CD4-positive, alpha-beta T cell (primary cell): ENCODE measurements at regions of chr9 and their contacts with region 1.

Region 1: GRCh38 chr9:37284636-37285035 is 137.9 kb upstream of the GRHPR start:
- DNase-seq: no peak
- ATAC-seq: no peak
- H3K4me3 ChIP-seq: no peak overlapping the region
- H3K4me3 Mint-ChIP-seq: no peak overlapping the region
- H3K27ac ChIP-seq: no peak overlapping the region
- H3K27ac Mint-ChIP-seq: no peak overlapping the region
- H3K4me1 ChIP-seq: no peaks in the 10 kb centered on the region
- H3K4me1 Mint-ChIP-seq: peaks cover 29% of the 10 kb centered on the region
- H3K27me3 ChIP-seq: no peaks in the 10 kb centered on the region
- H3K27me3 Mint-ChIP-seq: no peaks in the 10 kb centered on the region
- CTCF ChIP-seq: no peak

Region 2: GRCh38 chr9:37248651-37249163 is 35.9 kb before region 1 on chr9:
- CTCF ChIA-PET with region 1: no interaction called
- POLR2A ChIA-PET with region 1: no interaction called
- intact Hi-C with region 1: loop called in 1 of 2 experiments (anchors 5 kb)
- DNase-seq: no peak
- ATAC-seq: no peak
- H3K4me3 ChIP-seq: no peak overlapping the region
- H3K4me3 Mint-ChIP-seq: no peak overlapping the region
- H3K27ac ChIP-seq: no peak overlapping the region
- H3K27ac Mint-ChIP-seq: no peak overlapping the region
- H3K4me1 ChIP-seq: no peaks in the 10 kb centered on the region
- H3K4me1 Mint-ChIP-seq: peaks cover 19% of the 10 kb centered on the region
- H3K27me3 ChIP-seq: no peaks in the 10 kb centered on the region
- H3K27me3 Mint-ChIP-seq: no peaks in the 10 kb centered on the region
- CTCF ChIP-seq: no peak